Mammary epithelial cell (primary cell): ENCODE measurements at regions of chr17 and their contacts with region 1.

Region 1: GRCh38 chr17:20009302-20010098 is at the start of gene SPECC1:
- DNase-seq: peak; percentile 69
- H3K4me3 ChIP-seq: peak within 1 kb of the TSS; percentile 64 to 82 (median 75)
- H3K27ac ChIP-seq: no peak within 1 kb of the TSS
- H3K4me1 ChIP-seq: peaks cover 16% of the 10 kb centered on the region
- H3K27me3 ChIP-seq: peaks cover 2% of the 10 kb centered on the region
- CTCF ChIP-seq: peak in 1 of 2 donors; percentile 83
- total RNA-seq, gene SPECC1: 67.1 to 122 TPM

Region 2: GRCh38 chr17:19897901-19898300 is 111.6 kb before region 1 on chr17:
- CTCF ChIA-PET with region 1: no interaction called
- dilution Hi-C with region 1: no loop called
- in situ Hi-C with region 1: no loop called
- intact Hi-C with region 1: no loop called
- DNase-seq: peak; percentile 61
- H3K4me3 ChIP-seq: no peak overlapping the region
- H3K27ac ChIP-seq: peak overlapping the region; percentile 6
- H3K4me1 ChIP-seq: peaks cover 9% of the 10 kb centered on the region
- H3K27me3 ChIP-seq: no peaks in the 10 kb centered on the region
- CTCF ChIP-seq: no peak

Region 3: DNA sequence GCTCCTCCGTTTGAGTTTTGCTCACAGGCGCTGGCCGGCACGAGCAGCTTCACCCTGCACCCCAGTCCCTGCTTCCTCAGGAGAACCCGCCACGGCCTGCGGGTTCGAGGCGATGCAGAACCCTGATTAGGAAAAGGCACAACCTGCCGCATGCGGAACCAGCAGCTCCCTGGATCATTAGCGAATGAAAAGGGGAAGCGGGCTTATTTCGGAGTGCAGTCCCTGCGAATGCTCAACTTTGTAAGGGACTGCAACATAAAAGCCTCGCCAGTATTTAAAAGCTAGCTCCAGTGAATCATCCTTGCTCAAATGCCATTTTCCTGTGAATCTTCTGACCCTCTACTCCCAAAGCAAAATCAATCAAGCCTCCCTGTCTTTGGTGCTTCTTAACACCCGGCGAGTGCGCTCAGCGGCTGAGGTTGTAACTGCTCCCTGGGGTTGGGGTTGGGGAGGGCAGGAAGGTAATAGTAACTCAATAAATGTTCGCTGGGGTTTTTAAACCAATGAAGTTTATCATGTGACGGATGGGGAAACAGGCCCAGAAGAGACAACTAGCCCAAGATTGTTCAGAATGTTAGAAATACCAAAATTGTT is 31.2 kb before region 1 on chr17:
- CTCF ChIA-PET with region 1: interaction called, 10 read pairs
- dilution Hi-C with region 1: no loop called
- in situ Hi-C with region 1: no loop called
- intact Hi-C with region 1: no loop called
- DNase-seq: no peak
- H3K4me3 ChIP-seq: peak overlapping the region; percentile 60 to 87 (median 66)
- H3K27ac ChIP-seq: no peak overlapping the region
- H3K4me1 ChIP-seq: peaks cover 13% of the 10 kb centered on the region
- H3K27me3 ChIP-seq: no peaks in the 10 kb centered on the region
- CTCF ChIP-seq: no peak

Region 4: DNA sequence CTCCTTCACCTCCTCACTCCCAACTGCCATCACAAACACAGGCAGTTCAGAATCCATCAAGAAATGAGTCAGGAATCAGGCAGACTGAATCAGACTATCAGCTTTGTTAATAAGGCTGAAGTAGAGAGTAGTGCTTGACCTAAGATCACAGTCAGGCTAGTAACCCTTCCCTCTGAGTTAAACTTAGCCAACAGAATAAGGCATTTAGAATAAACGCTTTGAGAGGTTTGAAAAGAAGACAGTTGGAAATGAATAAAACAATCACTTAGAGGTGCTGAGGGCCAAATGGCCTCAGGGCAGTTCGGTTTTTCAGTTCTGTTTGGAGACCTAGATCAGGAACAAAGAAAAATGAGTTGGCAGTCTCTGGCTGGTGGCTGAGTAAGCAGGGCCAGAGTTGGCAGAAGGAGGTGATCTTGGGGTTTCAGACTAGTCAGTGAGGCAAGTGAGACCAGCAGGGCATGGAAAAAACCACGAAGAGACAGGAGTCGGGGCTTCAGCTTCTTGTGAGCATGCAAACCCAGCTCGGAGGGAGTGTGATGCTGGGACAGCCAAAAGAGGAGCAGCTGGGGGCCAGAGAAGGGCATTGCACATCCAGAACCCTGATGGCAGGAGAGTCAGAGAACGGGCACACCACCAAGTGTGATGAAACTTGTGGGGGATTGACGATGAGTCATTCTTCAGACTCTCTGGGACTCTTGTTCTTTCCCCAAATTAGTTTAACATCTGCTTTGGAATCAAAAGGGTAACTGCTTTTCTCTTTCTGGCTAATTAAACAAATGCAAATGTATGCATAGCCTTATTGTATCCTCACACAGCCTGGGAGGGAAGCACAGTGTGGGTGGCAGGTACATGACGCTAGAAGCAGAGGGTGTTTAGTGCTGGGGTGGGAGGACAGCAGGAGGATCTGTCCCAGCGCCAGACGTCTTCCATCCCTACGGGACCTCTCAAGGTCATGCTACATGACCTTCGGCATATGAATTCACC is 54.5 kb after region 1 on chr17:
- CTCF ChIA-PET with region 1: no interaction called
- dilution Hi-C with region 1: no loop called
- in situ Hi-C with region 1: no loop called
- intact Hi-C with region 1: no loop called
- DNase-seq: peak; percentile 90
- H3K4me3 ChIP-seq: peak overlapping the region in 2 of 3 experiments; percentile 4 to 5
- H3K27ac ChIP-seq: peak overlapping the region; percentile 74
- H3K4me1 ChIP-seq: peaks cover 46% of the 10 kb centered on the region
- H3K27me3 ChIP-seq: no peaks in the 10 kb centered on the region
- CTCF ChIP-seq: no peak

Region 5: DNA sequence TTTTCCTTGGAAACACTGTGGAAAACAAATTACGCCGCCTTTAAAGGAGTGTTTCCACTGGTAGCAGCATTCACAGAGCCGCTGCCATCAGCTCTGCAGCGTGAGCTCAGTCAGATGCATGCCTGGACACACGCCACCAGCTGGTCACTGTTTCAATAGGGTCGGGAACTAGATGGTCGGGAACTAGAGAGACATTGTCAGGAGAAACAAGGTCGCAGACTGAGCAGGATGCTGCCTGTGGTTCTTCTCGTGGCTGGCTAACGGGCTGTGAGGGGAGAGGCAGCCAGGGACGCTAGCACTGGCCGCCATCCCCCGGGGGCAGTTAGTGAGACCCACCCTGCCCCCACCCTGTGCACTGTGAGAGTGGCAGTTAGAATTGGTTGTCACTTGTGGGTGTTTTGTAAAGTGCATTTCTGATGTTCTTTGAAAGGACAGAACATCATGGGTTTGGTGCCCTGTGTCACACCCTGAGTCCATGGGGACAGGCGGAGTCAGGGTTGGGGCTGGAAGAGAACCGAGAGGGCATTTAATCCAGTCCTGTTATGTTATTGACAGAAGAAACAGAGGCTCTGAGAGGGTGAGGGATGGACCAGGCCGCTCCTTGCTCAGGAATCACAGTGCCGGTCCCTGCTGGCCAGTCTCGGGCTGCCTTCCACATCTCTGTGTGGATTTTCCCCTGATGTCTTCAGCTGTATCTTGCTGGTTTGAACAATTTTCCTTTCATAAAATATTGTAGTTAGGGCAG is 86.0 kb after region 1 on chr17:
- CTCF ChIA-PET with region 1: no interaction called
- dilution Hi-C with region 1: no loop called
- in situ Hi-C with region 1: no loop called
- intact Hi-C with region 1: loop called (anchors 1 kb)
- DNase-seq: peak; percentile 36
- H3K4me3 ChIP-seq: no peak overlapping the region
- H3K27ac ChIP-seq: no peak overlapping the region
- H3K4me1 ChIP-seq: peaks cover 9% of the 10 kb centered on the region
- H3K27me3 ChIP-seq: no peaks in the 10 kb centered on the region
- CTCF ChIP-seq: peak; percentile 8 to 60

Region 6: GRCh38 chr17:20174588-20175265 is 165.2 kb after region 1 on chr17:
- CTCF ChIA-PET with region 1: no interaction called
- dilution Hi-C with region 1: no loop called
- in situ Hi-C with region 1: no loop called
- intact Hi-C with region 1: no loop called
- DNase-seq: no peak
- H3K4me3 ChIP-seq: no peak overlapping the region
- H3K27ac ChIP-seq: no peak overlapping the region
- H3K4me1 ChIP-seq: peaks cover 32% of the 10 kb centered on the region
- H3K27me3 ChIP-seq: no peaks in the 10 kb centered on the region
- CTCF ChIP-seq: no peak

Region 7: GRCh38 chr17:20244671-20245070 is 235.2 kb after region 1 on chr17:
- CTCF ChIA-PET with region 1: interaction called, 21 read pairs
- dilution Hi-C with region 1: no loop called
- in situ Hi-C with region 1: no loop called
- intact Hi-C with region 1: no loop called
- DNase-seq: no peak
- H3K4me3 ChIP-seq: no peak overlapping the region
- H3K27ac ChIP-seq: no peak overlapping the region
- H3K4me1 ChIP-seq: no peaks in the 10 kb centered on the region
- H3K27me3 ChIP-seq: no peaks in the 10 kb centered on the region
- CTCF ChIP-seq: no peak